HepG2 (cell line): ENCODE measurements at regions of chr10 and their contacts with region 1.

Region 1: DNA sequence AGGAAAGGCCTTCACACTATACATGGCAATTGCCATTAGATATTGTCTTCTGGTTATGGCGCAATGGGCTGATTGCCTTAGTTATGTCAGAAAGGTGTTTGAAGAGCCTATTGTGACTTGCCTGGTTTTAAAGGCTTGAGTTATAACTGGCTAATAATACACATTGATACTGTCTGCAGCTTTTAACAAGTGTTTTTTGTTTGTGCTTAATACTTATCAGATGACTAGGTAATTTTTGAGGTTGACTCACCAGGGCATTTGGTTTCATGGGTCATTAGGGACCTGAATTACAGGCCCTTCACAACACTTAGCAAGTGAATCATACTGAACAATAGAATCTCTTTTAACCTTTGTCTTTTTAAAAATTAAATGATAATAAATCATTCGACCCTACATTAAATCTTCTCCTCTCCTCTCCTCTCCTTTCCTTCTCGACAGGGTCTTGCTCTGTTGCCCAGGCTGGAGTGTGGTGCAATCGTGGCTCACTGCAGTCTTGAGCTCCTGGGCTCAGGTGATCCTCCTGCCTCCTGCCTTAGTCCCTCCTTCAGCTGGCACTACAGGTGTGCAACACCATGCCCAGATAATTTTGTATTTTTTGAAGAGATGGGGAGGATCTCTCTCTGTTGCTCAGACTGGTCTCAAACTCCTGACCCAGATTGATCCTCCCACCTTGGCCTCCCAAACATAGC is 196.3 kb downstream of the JCAD start:
- DNase-seq: no peak
- ATAC-seq: no peak
- H3K4me3 ChIP-seq: no peak overlapping the region
- H3K27ac ChIP-seq: no peak overlapping the region
- H3K4me1 ChIP-seq: peaks cover 6% of the 10 kb centered on the region; the same call in 1 of the 2 replicates
- H3K27me3 ChIP-seq: no peaks in the 10 kb centered on the region
- CTCF ChIP-seq: no peak
- EP300 ChIP-seq: no peak
- POLR2A ChIP-seq: no peak
- RAD21 ChIP-seq: no peak

Region 2: GRCh38 chr10:29189256-29189655 is 673.8 kb before region 1 on chr10:
- CTCF ChIA-PET with region 1: no interaction called
- POLR2A ChIA-PET with region 1: no interaction called
- in situ Hi-C with region 1: no loop called
- intact Hi-C with region 1: loop called (anchors 5 kb)
- DNase-seq: no peak
- ATAC-seq: no peak
- H3K4me3 ChIP-seq: no peak overlapping the region
- H3K27ac ChIP-seq: no peak overlapping the region
- H3K4me1 ChIP-seq: no peaks in the 10 kb centered on the region
- H3K27me3 ChIP-seq: peaks cover 3 to 7% of the 10 kb centered on the region in 2 experiments; a peak in 2 of 5 replicates
- CTCF ChIP-seq: no peak
- EP300 ChIP-seq: no peak
- POLR2A ChIP-seq: no peak
- RAD21 ChIP-seq: no peak

Region 3: GRCh38 chr10:29784175-29784773 is 78.8 kb before region 1 on chr10:
- CTCF ChIA-PET with region 1: no interaction called
- POLR2A ChIA-PET with region 1: no interaction called
- in situ Hi-C with region 1: no loop called
- intact Hi-C with region 1: no loop called
- DNase-seq: peak; percentile 29
- ATAC-seq: peak; percentile 41; the same call in 1 of the 3 replicates
- H3K4me3 ChIP-seq: no peak overlapping the region
- H3K27ac ChIP-seq: no peak overlapping the region
- H3K4me1 ChIP-seq: 0 out of 2 replicates have a peak, but pooled peaks cover 7% of the 10 kb centered on the region
- H3K27me3 ChIP-seq: peaks cover 0 to 3% of the 10 kb centered on the region in 2 experiments; a peak in 1 of 5 replicates
- CTCF ChIP-seq: no peak
- EP300 ChIP-seq: peak in 1 of 2 experiments; percentile 13; a peak in 1 of 4 replicates
- POLR2A ChIP-seq: no peak
- RAD21 ChIP-seq: no peak